Activated CD4-positive, alpha-beta T cell treated with anti-CD3 and anti-CD28 coated beads for 36 hours (primary cell): ENCODE measurements at regions of chr9 and their contacts with region 1.

Region 1: DNA sequence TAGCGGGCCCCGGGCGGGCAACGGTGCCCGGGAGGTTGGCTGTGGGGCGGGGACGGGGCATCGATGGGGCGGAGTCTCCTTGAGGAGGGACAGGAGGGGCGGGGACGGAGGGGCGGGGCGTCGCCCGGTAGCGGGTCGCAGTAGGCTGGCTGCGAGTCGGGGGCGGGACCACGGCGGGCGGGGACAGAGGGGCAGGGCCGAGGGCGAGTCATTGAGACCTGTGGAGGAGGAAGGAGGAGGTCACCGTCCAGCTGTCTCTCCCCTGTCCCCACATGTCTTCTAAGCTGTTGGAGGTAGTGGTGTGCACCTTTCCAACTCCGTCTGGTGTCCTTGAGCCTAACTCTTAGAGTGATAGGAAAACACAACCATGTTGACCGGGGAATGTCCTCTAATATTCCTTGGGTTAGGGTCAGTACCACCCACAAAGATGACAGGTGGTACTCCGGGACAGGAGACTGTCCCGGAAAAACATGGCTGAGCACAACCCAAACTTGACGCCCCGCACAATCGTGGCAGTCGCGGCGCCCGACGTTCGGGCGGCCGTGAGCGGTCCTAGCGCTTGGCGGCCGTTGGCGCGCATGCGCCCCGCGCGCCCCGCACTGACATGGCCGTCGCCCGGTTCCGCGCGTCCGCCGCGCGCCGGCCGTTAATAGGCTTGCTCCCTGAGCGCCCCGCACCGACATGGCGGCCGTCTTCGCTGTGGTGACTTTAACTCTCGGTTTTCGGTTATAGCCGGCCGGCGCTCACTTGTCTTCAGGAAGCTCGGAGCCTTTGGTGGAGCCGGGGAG is at the starts of genes CRAT and PTPA:
- DNase-seq: peak; percentile 99
- ATAC-seq: peak; percentile 90
- H3K4me3 Mint-ChIP-seq: peak within 1 kb of the TSS; percentile 93
- H3K27ac Mint-ChIP-seq: peak within 1 kb of the TSS; percentile 94
- H3K4me1 Mint-ChIP-seq: peaks cover 38% of the 10 kb centered on the region
- H3K27me3 Mint-ChIP-seq: no peaks in the 10 kb centered on the region
- total RNA-seq, gene CRAT: 13.2 to 18.9 TPM
- total RNA-seq, gene PTPA: 71.9 to 88.0 TPM

Region 2: DNA sequence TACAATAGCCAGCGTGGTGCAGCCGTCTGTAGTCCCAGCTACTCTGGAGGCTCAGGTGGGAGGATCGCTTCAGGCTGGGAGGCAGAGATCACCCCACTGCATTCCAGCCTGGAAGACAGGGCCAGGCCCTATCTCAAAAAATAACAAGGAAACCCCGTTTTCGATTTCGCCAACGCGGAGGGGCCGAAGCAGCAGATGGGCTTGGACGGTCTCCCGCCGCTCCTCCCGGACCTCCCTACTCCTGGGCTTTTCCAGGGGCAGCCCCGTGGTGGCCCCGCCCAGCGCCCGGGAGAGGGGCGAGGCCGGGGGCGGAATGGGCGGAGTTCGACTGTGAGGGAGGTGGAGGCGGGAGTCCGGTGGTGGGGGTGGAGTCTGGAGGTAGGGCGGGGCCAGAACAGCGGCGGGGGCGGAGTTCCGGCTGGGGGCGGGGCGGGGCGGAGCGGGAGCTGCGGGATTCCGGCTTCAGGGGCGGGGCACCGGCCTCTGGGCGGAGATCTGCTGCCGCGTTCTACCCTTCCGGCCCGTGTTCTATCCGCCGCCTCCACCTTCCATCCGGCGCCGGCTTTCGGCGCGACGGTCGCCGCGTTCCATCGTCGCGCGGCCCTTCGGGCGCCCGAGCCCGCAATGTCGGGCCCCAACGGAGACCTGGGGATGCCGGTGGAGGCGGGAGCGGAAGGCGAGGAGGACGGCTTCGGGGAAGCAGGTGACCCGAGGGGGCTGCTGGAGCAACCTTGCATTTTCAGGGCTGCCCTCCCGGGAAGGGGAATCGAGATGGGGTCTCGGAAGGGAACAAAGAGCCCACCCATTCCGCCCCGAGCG is 950.9 kb before region 1 on chr9 and contains the start of gene BBLN:
- CTCF ChIA-PET with region 1: no interaction called
- POLR2A ChIA-PET with region 1: no interaction called
- intact Hi-C with region 1: loop called in 1 of 2 experiments (anchors 1 kb)
- DNase-seq: peak; percentile 98
- ATAC-seq: peak; percentile 91
- H3K4me3 Mint-ChIP-seq: peak within 1 kb of the TSS; percentile 74
- H3K27ac Mint-ChIP-seq: peak within 1 kb of the TSS; percentile 90
- H3K4me1 Mint-ChIP-seq: peaks cover 19% of the 10 kb centered on the region
- H3K27me3 Mint-ChIP-seq: no peaks in the 10 kb centered on the region
- total RNA-seq, gene BBLN: 64.4 to 68.5 TPM

Region 3: GRCh38 chr9:128723866-128724743 is 386.8 kb before region 1 on chr9 and contains the start of gene ZDHHC12:
- CTCF ChIA-PET with region 1: no interaction called
- POLR2A ChIA-PET with region 1: no interaction called
- intact Hi-C with region 1: loop called in 1 of 2 experiments (anchors 1 kb)
- DNase-seq: peak; percentile 100
- ATAC-seq: peak; percentile 98
- H3K4me3 Mint-ChIP-seq: peak within 1 kb of the TSS; percentile 95
- H3K27ac Mint-ChIP-seq: peak within 1 kb of the TSS; percentile 94
- H3K4me1 Mint-ChIP-seq: peaks cover 25% of the 10 kb centered on the region
- H3K27me3 Mint-ChIP-seq: no peaks in the 10 kb centered on the region
- total RNA-seq, gene ZDHHC12: 45.3 to 49.5 TPM

Region 4: GRCh38 chr9:128947422-128948301 is 163.3 kb before region 1 on chr9 and contains the starts of genes DOLK and NUP188:
- CTCF ChIA-PET with region 1: no interaction called
- POLR2A ChIA-PET with region 1: interaction called, 3 read pairs
- intact Hi-C with region 1: loop called in 1 of 2 experiments (anchors 1 kb)
- DNase-seq: peak; percentile 99
- ATAC-seq: peak; percentile 80
- H3K4me3 Mint-ChIP-seq: peak within 1 kb of the TSS; percentile 89
- H3K27ac Mint-ChIP-seq: peak within 1 kb of the TSS; percentile 95
- H3K4me1 Mint-ChIP-seq: peaks cover 29% of the 10 kb centered on the region
- H3K27me3 Mint-ChIP-seq: no peaks in the 10 kb centered on the region
- total RNA-seq, gene DOLK: 4.8 to 5.0 TPM
- total RNA-seq, gene NUP188: 102 to 124 TPM

Region 5: DNA sequence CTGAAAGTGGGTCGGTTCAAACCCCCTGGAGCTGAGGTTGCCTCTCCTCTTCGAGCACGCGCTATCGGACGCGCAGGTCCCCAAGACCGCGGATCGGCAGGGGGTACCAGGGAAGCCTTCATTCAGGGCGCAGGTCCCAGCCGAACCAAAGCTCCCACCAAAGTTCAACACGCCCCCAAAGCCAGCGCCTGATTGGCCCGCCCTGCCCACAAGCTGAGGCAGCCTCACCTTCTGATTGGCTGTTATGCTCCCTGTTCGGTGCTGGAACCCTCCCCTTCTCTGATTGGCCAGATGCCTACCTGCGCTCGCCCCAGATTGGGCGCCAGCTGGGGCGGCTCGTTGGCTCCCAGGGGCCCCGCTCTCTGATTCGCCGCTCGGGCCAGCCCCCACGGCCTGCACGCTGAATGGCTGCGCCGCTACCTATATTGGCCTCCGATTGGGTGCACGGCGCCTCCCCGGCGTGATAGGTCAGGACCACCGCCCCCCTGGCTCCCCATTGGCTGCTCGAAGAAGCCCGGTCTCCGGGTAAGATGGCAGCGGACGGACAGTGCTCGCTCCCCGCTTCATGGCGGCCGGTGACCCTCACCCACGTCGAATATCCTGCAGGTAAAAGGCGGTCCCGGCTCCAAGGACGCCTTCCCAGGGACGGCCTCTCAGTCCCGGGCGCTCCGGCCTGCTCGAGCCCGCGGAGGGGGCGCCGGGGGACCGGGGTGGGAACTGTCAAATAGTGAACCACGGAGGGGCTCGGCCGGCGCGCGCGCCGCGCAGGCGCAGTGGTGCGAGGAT is 30.1 kb before region 1 on chr9 and contains the start of gene DOLPP1:
- CTCF ChIA-PET with region 1: no interaction called
- POLR2A ChIA-PET with region 1: no interaction called
- intact Hi-C with region 1: loop called (anchors 1 to 2 kb)
- DNase-seq: peak; percentile 99
- ATAC-seq: peak; percentile 98
- H3K4me3 Mint-ChIP-seq: peak within 1 kb of the TSS; percentile 83
- H3K27ac Mint-ChIP-seq: peak within 1 kb of the TSS; percentile 63
- H3K4me1 Mint-ChIP-seq: peaks cover 20% of the 10 kb centered on the region
- H3K27me3 Mint-ChIP-seq: no peaks in the 10 kb centered on the region
- total RNA-seq, gene DOLPP1: 15.1 to 16.4 TPM

Region 6: GRCh38 chr9:129413537-129414376 is 302.8 kb after region 1 on chr9:
- CTCF ChIA-PET with region 1: no interaction called
- POLR2A ChIA-PET with region 1: no interaction called
- intact Hi-C with region 1: loop called in 1 of 2 experiments (anchors 1 kb)
- DNase-seq: peak; percentile 99
- ATAC-seq: peak; percentile 89
- H3K4me3 Mint-ChIP-seq: peak overlapping the region; percentile 75
- H3K27ac Mint-ChIP-seq: peak overlapping the region; percentile 94
- H3K4me1 Mint-ChIP-seq: peaks cover 23% of the 10 kb centered on the region
- H3K27me3 Mint-ChIP-seq: no peaks in the 10 kb centered on the region

Region 7: GRCh38 chr9:129802851-129803675 is 692.1 kb after region 1 on chr9 and contains the start of gene TOR1B:
- CTCF ChIA-PET with region 1: no interaction called
- POLR2A ChIA-PET with region 1: no interaction called
- intact Hi-C with region 1: loop called in 1 of 2 experiments (anchors 1 kb)
- DNase-seq: peak; percentile 95
- ATAC-seq: peak; percentile 92
- H3K4me3 Mint-ChIP-seq: peak within 1 kb of the TSS; percentile 81
- H3K27ac Mint-ChIP-seq: peak within 1 kb of the TSS; percentile 90
- H3K4me1 Mint-ChIP-seq: peaks cover 25% of the 10 kb centered on the region
- H3K27me3 Mint-ChIP-seq: no peaks in the 10 kb centered on the region
- total RNA-seq, gene TOR1B: 18.0 to 22.1 TPM